Activated CD4-positive, alpha-beta T cell treated with anti-CD3 and anti-CD28 coated beads for 36 hours (primary cell): ENCODE measurements at regions of chr14 and their contacts with region 1.

Region 1: GRCh38 chr14:81269100-81269978 is 48.6 kb upstream of the GTF2A1 start:
- DNase-seq: peak; percentile 6
- ATAC-seq: peak; percentile 73
- H3K4me3 Mint-ChIP-seq: no peak overlapping the region
- H3K27ac Mint-ChIP-seq: no peak overlapping the region
- H3K4me1 Mint-ChIP-seq: peaks cover 16% of the 10 kb centered on the region
- H3K27me3 Mint-ChIP-seq: peaks cover 9% of the 10 kb centered on the region

Region 2: GRCh38 chr14:81200054-81200453 is 69.3 kb before region 1 on chr14:
- CTCF ChIA-PET with region 1: no interaction called
- POLR2A ChIA-PET with region 1: no interaction called
- intact Hi-C with region 1: no loop called
- DNase-seq: peak; percentile 15
- ATAC-seq: peak; percentile 81
- H3K4me3 Mint-ChIP-seq: no peak overlapping the region
- H3K27ac Mint-ChIP-seq: peak overlapping the region; percentile 29
- H3K4me1 Mint-ChIP-seq: peaks cover 17% of the 10 kb centered on the region
- H3K27me3 Mint-ChIP-seq: no peaks in the 10 kb centered on the region

Region 3: DNA sequence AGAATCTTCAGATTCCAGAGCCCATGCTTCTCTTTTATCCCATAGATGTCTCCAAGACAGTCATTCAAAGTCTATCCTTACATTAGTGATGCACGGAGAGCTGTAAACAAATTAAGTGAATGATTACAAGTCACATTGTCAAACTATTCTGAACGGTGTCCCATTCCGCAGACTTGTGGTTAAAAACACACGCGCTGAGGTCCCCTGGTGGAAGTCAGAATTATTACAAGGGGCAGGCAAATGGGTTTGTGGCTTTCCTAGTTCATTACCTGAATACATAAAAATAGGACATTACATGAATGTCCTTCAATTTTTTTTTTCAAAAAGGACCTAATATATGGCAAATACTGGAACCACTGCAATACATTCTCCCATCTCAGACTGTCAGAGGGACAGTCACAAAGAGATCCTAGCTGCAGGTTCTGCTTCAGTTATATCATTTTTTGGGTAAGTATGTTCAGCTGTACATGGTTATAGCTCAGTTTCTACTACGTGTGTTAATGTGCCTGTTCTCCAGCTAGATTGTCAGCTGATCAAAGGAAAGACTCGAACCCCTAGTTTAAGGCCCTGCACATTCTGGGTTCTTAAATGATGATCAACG is 183.9 kb after region 1 on chr14:
- CTCF ChIA-PET with region 1: interaction called, 58 read pairs
- POLR2A ChIA-PET with region 1: no interaction called
- intact Hi-C with region 1: loop called (anchors 1 kb)
- DNase-seq: peak; percentile 70
- ATAC-seq: peak; percentile 61
- H3K4me3 Mint-ChIP-seq: no peak overlapping the region
- H3K27ac Mint-ChIP-seq: no peak overlapping the region
- H3K4me1 Mint-ChIP-seq: peaks cover 2% of the 10 kb centered on the region
- H3K27me3 Mint-ChIP-seq: peaks cover 4% of the 10 kb centered on the region

Region 4: GRCh38 chr14:81458352-81458751 is 189.0 kb after region 1 on chr14:
- CTCF ChIA-PET with region 1: interaction called, 58 read pairs
- POLR2A ChIA-PET with region 1: interaction called, 3 read pairs
- intact Hi-C with region 1: loop called (anchors 1 kb)
- DNase-seq: no peak
- ATAC-seq: peak; percentile 69
- H3K4me3 Mint-ChIP-seq: no peak overlapping the region
- H3K27ac Mint-ChIP-seq: no peak overlapping the region
- H3K4me1 Mint-ChIP-seq: peaks cover 2% of the 10 kb centered on the region
- H3K27me3 Mint-ChIP-seq: peaks cover 2% of the 10 kb centered on the region

Region 5: DNA sequence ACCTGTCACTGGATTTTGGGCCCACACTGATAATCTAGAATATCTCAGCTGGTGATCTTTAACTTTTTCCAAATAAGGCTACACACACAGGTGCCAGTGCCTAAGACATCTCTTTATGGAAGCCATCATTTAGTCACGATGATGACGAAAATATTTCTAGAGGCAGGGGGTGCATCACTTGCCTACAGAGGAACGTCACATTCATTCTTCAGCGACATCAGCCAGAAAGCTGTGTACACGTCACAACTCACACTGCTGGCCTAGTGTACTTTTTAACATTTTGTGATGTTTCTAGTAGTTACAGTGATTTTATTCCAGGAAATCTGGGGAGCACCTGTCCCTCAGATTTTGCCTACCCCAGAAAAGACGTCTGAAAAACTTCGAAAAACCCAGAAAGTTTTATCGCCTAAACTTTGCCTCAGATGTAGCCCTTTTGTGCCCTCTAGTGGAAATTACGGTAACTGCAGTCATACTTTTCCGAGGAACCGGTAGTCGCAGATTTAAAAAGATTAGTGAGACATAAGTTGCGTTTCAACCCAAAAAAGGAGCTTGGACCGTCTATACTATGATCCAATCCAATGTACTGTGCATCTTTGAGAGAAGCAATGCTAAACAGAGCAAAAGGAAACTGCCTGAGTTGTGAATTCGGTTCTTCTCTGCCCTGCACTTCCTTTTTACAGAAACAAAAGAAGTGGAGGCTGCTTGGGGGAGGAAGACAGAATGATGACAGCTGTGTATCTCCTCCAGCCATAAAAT is 195.1 kb after region 1 on chr14:
- CTCF ChIA-PET with region 1: interaction called, 30 read pairs
- POLR2A ChIA-PET with region 1: interaction called, 3 read pairs
- intact Hi-C with region 1: loop called in 1 of 2 experiments (anchors 1 kb)
- DNase-seq: peak; percentile 69
- ATAC-seq: peak; percentile 66
- H3K4me3 Mint-ChIP-seq: peak overlapping the region; percentile 70
- H3K27ac Mint-ChIP-seq: peak overlapping the region; percentile 85
- H3K4me1 Mint-ChIP-seq: peaks cover 7% of the 10 kb centered on the region
- H3K27me3 Mint-ChIP-seq: no peaks in the 10 kb centered on the region